Heart right ventricle (tissue), 16 donors: ENCODE measurements at regions of chr4 and their contacts with region 1.

Region 1: DNA sequence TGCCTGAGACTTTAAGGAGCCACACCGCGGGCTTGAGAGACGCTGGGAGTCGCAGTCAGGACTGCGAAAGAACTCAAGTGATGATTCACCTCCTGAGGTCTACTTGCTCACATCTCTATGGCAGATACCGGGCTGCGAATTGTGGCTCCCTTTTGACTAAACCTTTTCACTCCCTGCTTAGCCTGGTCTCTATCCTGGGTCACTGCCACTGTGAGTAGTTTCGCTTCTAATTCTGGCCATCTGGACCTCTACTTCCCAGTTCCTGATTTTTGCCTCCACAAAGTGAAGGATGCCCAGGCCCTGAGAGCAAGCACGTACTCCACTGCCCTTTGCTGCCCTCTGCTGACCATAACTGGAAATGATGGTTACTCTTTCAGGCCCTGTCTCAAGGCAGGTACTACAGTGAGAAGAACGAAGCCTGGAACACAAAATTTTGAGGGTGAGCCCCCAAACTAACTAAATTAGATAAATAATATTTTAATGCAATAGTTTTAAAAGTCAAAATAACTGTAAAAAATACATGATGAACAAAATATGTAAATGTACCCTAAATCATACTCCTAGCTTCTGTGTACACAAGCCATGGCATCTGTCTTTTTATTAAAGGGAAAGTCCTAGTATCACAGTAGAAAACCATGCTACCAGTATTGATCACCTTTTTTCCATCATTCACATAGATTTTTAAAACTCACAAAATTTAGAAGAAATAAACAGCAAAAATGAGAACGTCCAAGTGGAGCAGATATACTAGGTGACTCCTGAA is 16.7 kb downstream of the MAD2L1 start:
- DNase-seq: peak; percentile 21 to 87
- ATAC-seq: peak; percentile 89 to 94 (median 93)
- H3K4me3 ChIP-seq: peak overlapping the region in 6 of 10 donors; percentile 17 to 41 (median 32)
- H3K27ac ChIP-seq: peak overlapping the region in 7 of 10 donors; percentile 8 to 56 (median 50)
- H3K4me1 ChIP-seq: peaks cover 0 to 25% (median 0%) of the 10 kb centered on the region in 9 donors
- H3K27me3 ChIP-seq: no peaks in the 10 kb centered on the region
- CTCF ChIP-seq: peak; percentile 79 to 92 (median 85)

Region 2: GRCh38 chr4:119314356-119314755 is 735.6 kb before region 1 on chr4:
- intact Hi-C with region 1: loop called in 9 of 10 experiments (anchors 5 to 10 kb)
- DNase-seq: peak in 1 of 2 donors; percentile 29
- ATAC-seq: peak in 7 of 8 donors; percentile 62 to 80 (median 76)
- H3K4me3 ChIP-seq: no peak overlapping the region
- H3K27ac ChIP-seq: no peak overlapping the region
- H3K4me1 ChIP-seq: peaks cover 0 to 5% (median 0%) of the 10 kb centered on the region in 9 donors
- H3K27me3 ChIP-seq: no peaks in the 10 kb centered on the region
- CTCF ChIP-seq: peak in 8 of 9 donors; percentile 34 to 78 (median 63)

Region 3: DNA sequence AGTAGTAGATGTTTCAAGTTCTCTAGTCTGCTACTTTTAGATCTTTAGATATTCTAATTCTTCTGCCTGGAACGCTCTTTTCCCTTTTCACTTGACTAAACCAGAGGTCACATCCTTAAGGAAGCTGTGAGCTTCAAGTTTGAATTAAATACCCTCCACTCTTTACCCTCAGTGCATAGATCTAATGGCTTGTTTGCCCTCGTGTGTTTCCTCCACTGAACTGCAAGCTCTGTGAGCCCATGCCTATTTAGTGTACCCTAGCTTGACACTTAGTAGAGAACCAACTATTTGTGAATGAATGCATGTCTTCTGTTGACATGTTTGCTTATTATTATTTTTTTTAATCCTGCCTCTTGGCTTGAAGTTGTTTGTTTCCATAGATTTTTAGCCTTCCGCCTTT is 559.6 kb before region 1 on chr4:
- intact Hi-C with region 1: no loop called
- DNase-seq: no peak
- ATAC-seq: peak in 1 of 8 donors; percentile 51
- H3K4me3 ChIP-seq: no peak overlapping the region
- H3K27ac ChIP-seq: no peak overlapping the region
- H3K4me1 ChIP-seq: no peaks in the 10 kb centered on the region
- H3K27me3 ChIP-seq: no peaks in the 10 kb centered on the region
- CTCF ChIP-seq: peak in 6 of 9 donors; percentile 9 to 40 (median 22)

Region 4: DNA sequence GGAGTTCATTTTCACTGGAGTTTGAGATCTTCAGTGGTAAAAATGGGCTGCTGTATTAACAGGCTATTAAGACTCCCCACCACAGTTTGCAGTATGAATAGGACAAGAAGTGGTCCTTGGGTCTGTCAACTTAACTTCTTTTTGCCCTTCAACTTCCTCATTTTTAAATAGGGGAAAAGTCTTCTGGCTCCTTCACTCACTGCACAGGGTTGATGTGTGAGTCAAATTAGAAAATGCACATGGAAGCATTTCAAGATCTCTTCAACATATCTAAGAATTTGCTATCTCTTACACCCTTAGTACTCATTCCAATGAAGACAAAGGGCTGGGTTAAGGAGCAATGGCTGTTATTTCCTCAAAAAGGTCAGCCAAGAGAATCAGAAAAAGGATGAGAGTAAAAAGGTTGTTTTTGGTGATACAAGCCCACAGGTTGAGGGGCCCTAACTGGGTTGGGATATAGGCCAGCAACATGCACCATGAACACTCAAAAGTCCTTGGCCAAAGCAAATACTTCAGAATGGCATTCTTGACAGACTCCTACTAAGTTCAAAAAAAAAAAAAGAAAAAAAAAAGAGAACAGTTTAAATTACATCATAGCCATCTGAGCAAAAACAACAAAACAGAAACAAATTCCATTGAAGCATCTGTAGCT is 434.7 kb before region 1 on chr4:
- intact Hi-C with region 1: no loop called
- DNase-seq: no peak
- ATAC-seq: peak in 1 of 8 donors; percentile 52
- H3K4me3 ChIP-seq: no peak overlapping the region
- H3K27ac ChIP-seq: no peak overlapping the region
- H3K4me1 ChIP-seq: peaks cover 0 to 23% (median 0%) of the 10 kb centered on the region in 9 donors
- H3K27me3 ChIP-seq: no peaks in the 10 kb centered on the region
- CTCF ChIP-seq: no peak

Region 5: GRCh38 chr4:119628308-119629141 is 421.4 kb before region 1 on chr4 and contains the start of gene PDE5A:
- intact Hi-C with region 1: loop called in 9 of 10 experiments (anchors 1 to 5 kb)
- DNase-seq: peak; percentile 72 to 84
- ATAC-seq: peak; percentile 80 to 95 (median 88)
- H3K4me3 ChIP-seq: peak within 1 kb of the TSS; percentile 80 to 91 (median 82)
- H3K27ac ChIP-seq: peak within 1 kb of the TSS; percentile 78 to 92 (median 88)
- H3K4me1 ChIP-seq: peaks cover 0 to 25% (median 7%) of the 10 kb centered on the region in 9 donors
- H3K27me3 ChIP-seq: peaks cover 0 to 62% (median 3%) of the 10 kb centered on the region in 7 donors
- CTCF ChIP-seq: peak; percentile 59 to 93 (median 83)
- total RNA-seq, gene PDE5A: 5.8 to 17.4 (median 11.9) TPM

Region 6: DNA sequence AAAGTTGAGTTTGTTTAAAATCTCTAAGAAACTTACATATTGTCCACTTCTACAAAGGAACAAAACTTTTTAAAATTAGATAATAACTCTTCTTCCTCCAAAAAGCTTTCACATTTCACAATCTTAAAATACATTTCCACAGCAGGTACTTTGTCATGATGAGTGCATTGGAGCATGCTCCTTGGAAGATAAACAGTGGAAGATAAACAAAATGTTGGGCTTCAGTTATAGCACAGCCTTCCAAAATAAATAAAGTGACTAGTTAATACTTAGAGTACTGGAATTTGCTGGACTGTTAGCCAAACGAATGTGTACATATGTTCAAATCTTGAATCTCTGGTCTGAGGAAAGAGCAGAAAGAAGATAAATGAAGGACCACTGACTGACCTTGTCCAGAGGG is 366.4 kb before region 1 on chr4:
- intact Hi-C with region 1: no loop called
- DNase-seq: no peak
- ATAC-seq: peak in 7 of 8 donors; percentile 52 to 84 (median 74)
- H3K4me3 ChIP-seq: no peak overlapping the region
- H3K27ac ChIP-seq: peak overlapping the region in 3 of 10 donors; percentile 7 to 58 (median 39)
- H3K4me1 ChIP-seq: peaks cover 0 to 12% (median 0%) of the 10 kb centered on the region in 9 donors
- H3K27me3 ChIP-seq: no peaks in the 10 kb centered on the region
- CTCF ChIP-seq: no peak

Region 7: DNA sequence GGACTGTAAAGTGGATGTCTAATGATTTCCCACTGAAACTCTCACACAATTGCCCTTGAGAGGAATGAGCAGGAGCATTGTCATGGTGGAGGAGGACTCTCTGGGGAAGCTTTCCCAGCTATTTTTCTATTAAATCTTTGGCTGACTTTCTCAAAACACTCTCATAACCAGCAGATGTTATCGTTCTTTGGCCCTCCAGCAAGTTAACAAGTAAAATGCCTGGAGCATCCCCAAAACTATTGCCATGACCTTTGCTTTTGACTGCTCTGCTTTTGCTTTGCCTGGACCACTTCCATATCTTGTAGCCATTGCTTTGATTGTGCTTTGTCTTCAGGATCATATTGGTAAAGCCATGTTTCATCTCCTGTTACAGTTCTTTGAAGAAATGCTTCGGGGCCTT is 301.1 kb before region 1 on chr4:
- intact Hi-C with region 1: no loop called
- DNase-seq: no peak
- ATAC-seq: peak in 5 of 8 donors; percentile 18 to 49 (median 20)
- H3K4me3 ChIP-seq: no peak overlapping the region
- H3K27ac ChIP-seq: peak overlapping the region in 5 of 10 donors; percentile 7 to 66 (median 23)
- H3K4me1 ChIP-seq: peaks cover 0 to 26% (median 0%) of the 10 kb centered on the region in 9 donors
- H3K27me3 ChIP-seq: no peaks in the 10 kb centered on the region
- CTCF ChIP-seq: no peak

Region 8: GRCh38 chr4:119785963-119786362 is 263.9 kb before region 1 on chr4:
- intact Hi-C with region 1: loop called in 3 of 10 experiments (anchors 5 to 10 kb)
- DNase-seq: no peak
- ATAC-seq: no peak
- H3K4me3 ChIP-seq: no peak overlapping the region
- H3K27ac ChIP-seq: no peak overlapping the region
- H3K4me1 ChIP-seq: peaks cover 0 to 4% (median 0%) of the 10 kb centered on the region in 9 donors
- H3K27me3 ChIP-seq: no peaks in the 10 kb centered on the region
- CTCF ChIP-seq: peak in 7 of 9 donors; percentile 16 to 60 (median 45)

Region 9: GRCh38 chr4:119804407-119804806 is 245.5 kb before region 1 on chr4:
- intact Hi-C with region 1: loop called in 2 of 10 experiments (anchors 10 kb)
- DNase-seq: no peak
- ATAC-seq: no peak
- H3K4me3 ChIP-seq: no peak overlapping the region
- H3K27ac ChIP-seq: no peak overlapping the region
- H3K4me1 ChIP-seq: no peaks in the 10 kb centered on the region
- H3K27me3 ChIP-seq: no peaks in the 10 kb centered on the region
- CTCF ChIP-seq: no peak